ENCODE measurements at regions of chr10 and their contacts with region 1.

Region 1: DNA sequence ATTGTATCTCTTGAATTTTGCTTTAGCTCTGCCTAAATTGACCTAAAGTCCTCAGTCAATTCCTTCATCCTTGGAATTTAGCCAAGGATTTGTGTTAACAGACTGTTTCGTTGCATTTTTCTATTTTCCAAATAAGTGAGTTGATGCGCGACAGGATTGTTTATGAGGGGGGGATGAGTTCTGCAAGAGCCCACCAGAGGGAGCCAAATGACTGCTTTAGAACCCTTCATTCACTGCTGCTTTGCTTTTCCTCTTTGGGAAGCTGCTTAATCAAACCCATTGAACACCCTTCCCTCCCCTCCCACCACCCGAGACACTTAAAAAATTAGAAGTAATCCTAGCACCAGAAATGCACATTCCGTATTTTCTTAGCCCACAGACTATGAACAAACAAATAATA is 33.7 kb upstream of the PTF1A start:
- DNase-seq: peak in 1 of 2 donors; percentile 19
- ATAC-seq: peak in 6 of 8 donors; percentile 69 to 81 (median 74)
- H3K4me3 ChIP-seq: no peak overlapping the region
- H3K27ac ChIP-seq: no peak overlapping the region
- H3K4me1 ChIP-seq: peaks cover 0 to 4% (median 0%) of the 10 kb centered on the region in 9 donors
- H3K27me3 ChIP-seq: peaks cover 0 to 34% (median 19%) of the 10 kb centered on the region in 7 donors
- CTCF ChIP-seq: peak; percentile 39 to 84 (median 78)

Region 2: DNA sequence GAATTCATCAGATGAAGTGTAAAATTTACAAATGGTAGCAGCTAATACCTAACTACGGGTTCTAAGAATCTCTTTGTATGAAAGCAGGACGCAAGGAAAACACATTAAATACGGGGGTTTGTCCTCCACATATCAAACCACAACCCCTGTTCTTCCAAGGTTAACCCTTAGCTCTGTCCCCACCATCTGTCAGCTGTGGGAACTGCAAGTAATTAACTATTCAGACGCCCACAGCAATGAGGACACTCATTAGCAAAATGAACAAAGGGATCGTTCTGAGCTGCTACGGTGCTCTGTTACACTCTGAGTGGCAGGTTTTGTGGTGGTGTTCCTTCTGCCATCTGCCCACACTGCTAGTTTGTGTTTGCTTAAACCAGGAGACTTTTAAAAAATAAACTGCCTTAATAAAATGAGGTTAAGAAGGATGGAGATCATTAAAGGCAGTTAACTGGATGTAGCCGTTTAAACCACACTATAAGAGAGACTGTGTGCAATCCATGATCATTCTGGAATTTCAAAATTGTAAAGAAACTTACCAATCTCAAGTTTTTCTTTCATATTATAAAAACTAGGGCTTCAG is 134.9 kb after region 1 on chr10:
- intact Hi-C with region 1: loop called in 2 of 10 experiments (anchors 5 to 10 kb)
- DNase-seq: no peak
- ATAC-seq: no peak
- H3K4me3 ChIP-seq: no peak overlapping the region
- H3K27ac ChIP-seq: no peak overlapping the region
- H3K4me1 ChIP-seq: no peaks in the 10 kb centered on the region
- H3K27me3 ChIP-seq: peaks cover 0 to 25% (median 12%) of the 10 kb centered on the region in 7 donors
- CTCF ChIP-seq: peak in 4 of 9 donors; percentile 19 to 48 (median 38)

Region 3: DNA sequence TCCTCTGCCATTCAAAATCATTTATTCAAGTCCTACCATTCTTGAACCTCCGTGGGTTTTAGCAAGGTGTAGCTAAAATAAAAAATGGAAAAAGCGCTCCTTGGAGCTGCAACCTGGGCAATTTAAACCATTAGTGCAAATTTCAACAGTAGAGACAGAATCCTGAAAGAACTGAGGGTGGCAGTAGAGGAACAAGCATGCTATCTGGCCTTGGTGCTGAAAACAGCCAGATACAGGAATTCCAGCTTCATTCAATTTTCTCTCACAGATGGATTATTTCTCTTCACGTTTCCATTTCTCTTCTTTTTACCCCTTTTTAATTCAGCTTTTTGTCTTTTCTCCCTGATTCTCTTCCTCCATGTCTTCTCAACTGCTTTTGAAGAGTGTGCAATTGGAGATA is 358.2 kb after region 1 on chr10:
- intact Hi-C with region 1: loop called in 2 of 10 experiments (anchors 5 to 10 kb)
- DNase-seq: no peak
- ATAC-seq: no peak
- H3K4me3 ChIP-seq: no peak overlapping the region
- H3K27ac ChIP-seq: no peak overlapping the region
- H3K4me1 ChIP-seq: peaks cover 0 to 3% (median 0%) of the 10 kb centered on the region in 9 donors
- H3K27me3 ChIP-seq: no peaks in the 10 kb centered on the region
- CTCF ChIP-seq: peak in 7 of 9 donors; percentile 8 to 58 (median 49)

Region 4: DNA sequence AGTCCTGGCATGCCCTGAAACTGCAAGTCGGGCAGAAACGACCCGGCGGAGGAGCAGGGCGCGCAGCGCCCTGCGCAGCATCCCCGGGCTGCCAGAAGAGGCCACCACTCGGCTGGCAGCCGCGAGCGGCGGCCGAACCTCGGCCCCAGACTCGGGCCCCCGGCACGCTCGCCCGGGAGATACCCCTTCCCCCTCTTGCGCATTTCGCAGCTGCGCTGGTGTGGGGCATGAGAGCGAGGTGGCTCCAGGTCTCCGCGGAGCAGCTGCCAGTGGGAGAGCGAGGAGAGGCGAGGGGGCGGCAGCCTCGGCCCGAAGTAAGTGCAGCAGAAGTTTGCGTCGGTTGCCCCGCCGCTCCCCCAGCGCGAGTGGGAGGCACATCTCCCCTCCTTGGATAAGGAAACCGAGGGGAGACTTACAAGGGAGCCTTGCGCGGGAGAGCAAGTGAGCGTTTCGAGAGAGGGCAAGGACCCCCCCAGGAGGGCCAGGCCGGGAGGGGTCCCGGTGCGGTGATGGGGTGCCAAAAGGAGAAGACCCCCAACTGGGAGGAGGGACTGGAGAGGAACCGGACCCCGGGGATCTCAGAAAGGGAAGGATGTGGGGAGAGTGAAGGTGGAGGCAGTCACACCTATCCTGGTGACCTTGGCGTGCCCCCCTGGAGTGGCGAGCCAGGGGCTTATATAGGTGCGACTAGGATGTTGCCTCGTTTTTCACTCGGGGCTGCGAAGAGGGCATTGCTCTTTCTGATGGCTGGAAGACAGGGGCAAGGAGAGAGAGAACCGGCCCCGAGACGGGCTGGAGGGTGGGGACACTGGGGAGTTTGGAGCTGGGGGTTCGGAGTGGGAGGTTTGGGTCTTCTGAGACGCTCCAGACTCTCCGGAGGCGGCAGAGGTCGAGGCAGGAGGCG is 536.8 kb after region 1 on chr10:
- intact Hi-C with region 1: loop called in 6 of 10 experiments (anchors 5 to 10 kb)
- DNase-seq: no peak
- ATAC-seq: peak in 2 of 8 donors; percentile 12 to 20
- H3K4me3 ChIP-seq: peak overlapping the region; percentile 14 to 47 (median 35)
- H3K27ac ChIP-seq: no peak overlapping the region
- H3K4me1 ChIP-seq: peaks cover 3 to 22% (median 18%) of the 10 kb centered on the region in 9 donors
- H3K27me3 ChIP-seq: peaks cover 19 to 87% (median 73%) of the 10 kb centered on the region in 7 donors
- CTCF ChIP-seq: no peak

Region 5: DNA sequence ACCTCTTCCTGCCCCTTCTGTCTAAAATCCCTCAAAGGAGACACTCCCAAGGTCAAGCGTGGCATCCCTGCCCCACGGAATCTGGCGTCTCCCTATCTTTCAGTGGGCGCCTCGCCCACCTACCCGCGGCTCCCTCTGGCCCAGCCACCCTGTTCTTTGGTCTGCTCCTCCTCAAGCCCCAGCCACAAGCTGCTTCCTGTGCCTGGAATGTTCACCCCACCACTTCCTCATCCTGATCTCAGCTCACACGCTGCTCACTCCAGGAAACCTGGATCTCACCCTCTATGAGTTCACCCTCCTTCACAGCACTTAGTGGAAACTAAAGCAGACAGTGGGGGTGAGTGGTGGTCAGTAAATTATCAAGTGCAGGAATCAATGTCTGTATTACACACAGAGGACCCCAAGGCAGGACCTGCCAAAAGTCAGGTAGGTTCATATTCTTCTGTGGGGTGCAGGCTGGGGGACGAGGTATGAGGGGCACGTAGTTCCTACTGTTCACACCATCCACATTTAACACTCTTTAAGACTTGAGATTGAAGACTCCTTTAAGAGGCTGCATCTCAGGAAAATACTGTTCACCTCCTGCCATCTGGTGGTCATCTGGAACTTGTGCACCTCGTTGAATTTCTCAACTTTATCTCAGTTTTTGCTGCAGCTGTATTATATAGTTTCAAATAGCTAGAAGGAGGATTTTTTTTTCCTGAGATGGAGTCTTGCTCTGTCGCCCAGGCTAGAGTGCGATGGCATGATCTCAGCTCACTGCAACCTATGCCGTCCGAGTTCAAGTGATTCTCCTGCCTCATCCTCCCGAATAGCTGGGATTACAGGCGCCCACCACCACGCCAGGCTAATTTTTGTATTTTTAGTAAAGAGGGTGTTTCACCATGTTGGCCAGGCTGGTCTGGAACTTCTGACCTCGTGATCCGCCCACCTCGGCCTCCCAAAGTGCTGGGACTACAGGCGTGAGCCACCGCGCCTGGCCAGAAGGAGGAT is 1398.7 kb after region 1 on chr10:
- intact Hi-C with region 1: loop called in 1 of 10 experiments (anchors 5 kb)
- DNase-seq: peak in 1 of 2 donors; percentile 32
- ATAC-seq: peak in 5 of 8 donors; percentile 23 to 54 (median 41)
- H3K4me3 ChIP-seq: no peak overlapping the region
- H3K27ac ChIP-seq: no peak overlapping the region
- H3K4me1 ChIP-seq: peaks cover 0 to 12% (median 9%) of the 10 kb centered on the region in 9 donors
- H3K27me3 ChIP-seq: no peaks in the 10 kb centered on the region
- CTCF ChIP-seq: peak; percentile 30 to 77 (median 63)

Measured in heart right ventricle (tissue), 16 donors.